Right cardiac atrium (tissue), 5 donors: ENCODE measurements at regions of chr5 and their contacts with region 1.

Region 1: GRCh38 chr5:97142521-97143254 is at the start of gene LIX1:
- DNase-seq: peak in 1 of 3 donors; percentile 61
- ATAC-seq: peak; percentile 63 to 72
- H3K4me3 ChIP-seq: no peak within 1 kb of the TSS
- H3K27ac ChIP-seq: no peak within 1 kb of the TSS
- H3K4me1 ChIP-seq: no peaks in the 10 kb centered on the region
- H3K27me3 ChIP-seq: no peaks in the 10 kb centered on the region
- total RNA-seq, gene LIX1: 0.20 to 0.50 (median 0.36) TPM

Region 2: GRCh38 chr5:97009212-97009898 is 133.3 kb before region 1 on chr5:
- intact Hi-C with region 1: loop called in 1 of 4 experiments (anchors 10 kb)
- DNase-seq: no peak
- ATAC-seq: no peak
- H3K4me3 ChIP-seq: no peak overlapping the region
- H3K27ac ChIP-seq: no peak overlapping the region
- H3K4me1 ChIP-seq: peaks cover 2% of the 10 kb centered on the region
- H3K27me3 ChIP-seq: no peaks in the 10 kb centered on the region

Region 3: DNA sequence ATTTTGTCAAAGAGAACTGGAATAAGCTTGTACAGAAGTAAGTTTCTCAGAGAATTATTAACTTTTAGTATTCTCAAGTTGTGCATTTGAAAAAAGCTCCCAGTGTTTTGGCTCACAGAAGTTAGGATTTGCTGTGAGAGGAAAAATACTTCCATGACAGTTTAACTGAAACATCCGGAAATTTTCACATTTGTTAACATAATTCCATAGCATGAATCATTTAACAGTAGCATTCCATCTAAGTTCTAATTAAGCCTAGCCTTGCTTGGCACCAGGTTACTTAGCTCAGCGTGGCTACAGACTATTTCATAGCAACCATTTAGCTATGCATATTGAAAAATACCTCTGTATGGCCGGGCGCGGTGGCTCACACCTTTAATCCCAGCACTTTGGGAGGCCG is 116.0 kb before region 1 on chr5:
- intact Hi-C with region 1: no loop called
- DNase-seq: no peak
- ATAC-seq: no peak
- H3K4me3 ChIP-seq: no peak overlapping the region
- H3K27ac ChIP-seq: no peak overlapping the region
- H3K4me1 ChIP-seq: no peaks in the 10 kb centered on the region
- H3K27me3 ChIP-seq: no peaks in the 10 kb centered on the region

Region 4: DNA sequence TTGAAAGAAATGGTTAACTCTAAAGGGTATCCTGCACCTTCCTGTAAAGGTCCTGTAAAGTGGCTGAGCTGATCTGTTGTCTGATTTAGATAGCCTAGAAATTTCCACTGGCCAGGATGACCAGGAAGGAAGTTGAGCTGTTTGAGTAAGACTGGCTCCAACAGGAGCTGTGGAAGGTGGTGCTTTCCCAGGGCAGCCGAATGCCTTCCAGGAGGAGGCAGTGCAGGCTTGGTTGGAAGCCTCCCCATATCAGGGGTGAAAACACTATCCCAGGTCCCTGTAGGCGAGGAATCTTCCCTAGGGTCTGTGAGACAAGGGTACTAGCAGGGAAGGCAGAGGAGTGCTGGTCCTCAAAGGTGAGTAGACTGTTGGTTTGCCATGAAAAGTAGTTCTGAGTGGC is 98.6 kb before region 1 on chr5:
- intact Hi-C with region 1: loop called in 1 of 4 experiments (anchors 10 kb)
- DNase-seq: peak in 2 of 3 donors; percentile 51
- ATAC-seq: peak; percentile 82 to 87
- H3K4me3 ChIP-seq: no peak overlapping the region
- H3K27ac ChIP-seq: no peak overlapping the region
- H3K4me1 ChIP-seq: peaks cover 2% of the 10 kb centered on the region
- H3K27me3 ChIP-seq: no peaks in the 10 kb centered on the region

Region 5: GRCh38 chr5:97568382-97568781 is 425.7 kb after region 1 on chr5:
- intact Hi-C with region 1: no loop called
- DNase-seq: no peak
- ATAC-seq: no peak
- H3K4me3 ChIP-seq: no peak overlapping the region
- H3K27ac ChIP-seq: no peak overlapping the region
- H3K4me1 ChIP-seq: no peaks in the 10 kb centered on the region
- H3K27me3 ChIP-seq: no peaks in the 10 kb centered on the region